ENCODE measurements at regions of chr10 and their contacts with region 1.

Region 1: GRCh38 chr10:92523639-92524038 is 50.3 kb downstream of the IDE start:
- DNase-seq: no peak
- H3K4me3 ChIP-seq: no peak overlapping the region
- H3K4me1 ChIP-seq: no peaks in the 10 kb centered on the region
- H3K27me3 ChIP-seq: no peaks in the 10 kb centered on the region

Region 2: DNA sequence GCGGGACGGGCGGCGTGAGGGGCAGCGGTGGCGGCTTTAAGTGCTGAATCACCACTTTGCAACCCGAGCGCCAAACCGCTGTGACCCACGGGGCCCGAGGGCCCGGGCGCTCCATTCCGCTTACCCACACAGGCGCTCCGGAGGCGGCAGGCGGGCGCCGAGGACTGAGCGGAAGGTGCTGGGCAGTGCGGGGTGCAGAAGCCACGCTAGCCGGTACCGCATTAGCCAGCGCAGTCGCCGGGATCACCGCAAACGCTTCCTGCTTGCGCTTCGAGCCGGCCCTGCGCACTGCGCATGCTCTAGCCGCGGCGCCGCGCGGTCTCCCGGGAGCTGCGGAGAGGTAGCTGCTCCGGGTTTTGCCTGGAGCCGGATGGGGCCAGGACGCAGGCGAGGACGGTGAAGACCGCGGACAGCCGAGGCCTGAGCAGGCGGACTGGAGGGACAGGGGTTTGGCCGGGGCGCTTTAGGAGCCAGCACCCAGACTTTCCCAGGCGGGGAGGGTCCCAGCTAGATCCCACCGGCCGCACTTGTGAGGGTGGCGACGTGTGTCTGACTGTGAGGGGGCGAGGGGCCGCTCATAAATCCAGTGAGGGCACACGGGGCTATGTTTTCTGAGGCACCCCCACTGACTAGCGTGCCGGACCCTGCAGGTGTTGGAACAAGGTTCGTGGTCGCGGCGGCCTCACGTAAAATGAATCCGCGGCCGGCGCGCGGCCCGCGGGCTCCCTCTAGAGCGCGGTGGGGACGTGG is 50.3 kb after region 1 on chr10 and contains the start of gene IDE:
- in situ Hi-C with region 1: loop called (anchors 5 kb)
- DNase-seq: peak; percentile 78 to 92
- H3K4me3 ChIP-seq: peak within 1 kb of the TSS; percentile 85
- H3K4me1 ChIP-seq: peaks cover 19% of the 10 kb centered on the region
- H3K27me3 ChIP-seq: no peaks in the 10 kb centered on the region

Region 3: DNA sequence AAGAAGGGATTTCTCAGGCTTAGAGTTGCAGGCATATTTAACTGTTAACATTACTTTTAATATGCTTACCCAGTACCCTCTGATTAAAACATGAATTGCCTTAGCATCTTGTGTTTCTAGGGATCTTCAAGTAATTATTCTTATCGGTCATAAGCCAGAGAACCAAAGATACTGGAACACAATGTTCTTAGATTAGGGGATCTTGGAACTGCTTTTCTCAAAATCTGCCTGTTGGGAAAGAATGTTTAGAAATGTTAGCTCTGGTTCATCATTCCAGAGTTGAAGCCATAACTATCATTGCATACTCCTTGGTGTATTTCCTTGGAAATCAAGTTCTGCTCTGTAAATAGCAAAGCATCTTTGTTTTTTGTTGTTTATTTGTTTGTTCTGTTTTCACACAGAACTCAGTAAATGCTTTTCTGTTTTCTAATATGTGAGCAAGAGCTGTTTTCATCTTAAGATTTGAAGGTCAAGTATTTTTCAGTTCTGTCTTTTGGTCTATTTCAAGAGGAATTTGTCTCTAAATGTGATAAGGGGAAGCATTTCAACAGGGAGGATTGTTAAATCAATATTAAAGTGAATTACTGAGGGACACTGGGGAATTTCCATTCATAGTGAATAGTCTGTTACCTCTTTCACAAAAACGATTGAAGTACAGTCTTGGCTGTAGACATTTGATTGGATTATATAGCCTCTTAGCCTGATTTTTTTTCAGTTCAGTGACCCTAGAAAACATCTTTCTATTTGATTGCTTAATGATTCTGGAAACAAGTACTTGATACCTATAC is 433.8 kb after region 1 on chr10:
- in situ Hi-C with region 1: no loop called
- DNase-seq: peak in 1 of 2 experiments; percentile 19
- H3K4me3 ChIP-seq: no peak overlapping the region
- H3K4me1 ChIP-seq: peaks cover 21% of the 10 kb centered on the region
- H3K27me3 ChIP-seq: no peaks in the 10 kb centered on the region

Measured in HAP-1 (cell line).